Pancreas (tissue), 10 donors: ENCODE measurements at regions of chr7 and their contacts with region 1.

Region 1: GRCh38 chr7:87354749-87355148 is 9.3 kb downstream of the CROT start:
- DNase-seq: no peak
- ATAC-seq: no peak
- H3K4me3 ChIP-seq: no peak overlapping the region
- H3K27ac ChIP-seq: no peak overlapping the region
- H3K4me1 ChIP-seq: no peaks in the 10 kb centered on the region
- H3K27me3 ChIP-seq: no peaks in the 10 kb centered on the region
- CTCF ChIP-seq: no peak

Region 2: GRCh38 chr7:87404674-87405073 is 49.9 kb after region 1 on chr7:
- intact Hi-C with region 1: loop called in 1 of 3 experiments (anchors 5 kb)
- DNase-seq: no peak
- ATAC-seq: no peak
- H3K4me3 ChIP-seq: no peak overlapping the region
- H3K27ac ChIP-seq: no peak overlapping the region
- H3K4me1 ChIP-seq: no peaks in the 10 kb centered on the region
- H3K27me3 ChIP-seq: no peaks in the 10 kb centered on the region
- CTCF ChIP-seq: no peak